ENCODE measurements at regions of chr7 and their contacts with region 1.

Region 1: DNA sequence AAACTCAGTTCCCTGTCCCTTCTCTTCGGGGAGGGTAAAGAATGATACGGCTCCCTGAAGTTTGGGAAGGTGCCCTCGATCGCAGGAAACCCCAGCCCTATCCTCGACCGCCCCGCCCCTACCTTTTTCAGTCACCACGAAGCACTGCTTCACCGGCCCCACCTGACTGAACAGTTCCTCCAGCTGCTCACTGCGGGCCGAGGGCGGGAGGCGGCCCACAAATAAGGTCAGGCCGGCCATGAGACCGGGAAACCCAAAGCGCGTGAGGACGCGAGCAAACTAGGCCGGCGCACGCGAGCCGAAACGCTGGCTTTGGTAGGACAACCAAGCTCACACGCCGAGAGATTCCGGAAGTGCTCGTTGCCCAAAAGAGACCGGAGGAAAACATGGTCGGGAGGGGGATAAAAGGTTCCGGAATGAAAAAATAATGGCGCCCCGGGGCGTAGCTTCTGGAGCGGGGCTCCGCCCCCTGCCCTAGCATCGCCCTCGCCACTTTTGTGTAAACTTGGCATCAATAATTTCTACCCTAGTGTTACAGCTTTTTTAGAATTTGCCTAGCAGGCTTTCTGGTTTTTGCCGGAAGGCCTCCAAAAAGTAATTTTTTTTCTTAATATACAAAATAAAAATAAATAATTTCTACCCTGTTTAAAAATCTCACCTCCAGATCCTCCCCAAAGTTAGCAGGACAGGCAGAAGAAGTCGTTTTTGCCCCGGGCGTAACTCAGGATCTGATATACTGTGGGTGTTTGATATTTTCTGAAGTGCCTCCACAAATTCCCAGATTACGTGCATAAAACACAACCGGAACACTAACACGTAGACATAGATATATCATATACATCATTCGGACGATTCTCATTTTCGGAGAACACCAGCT is at the start of gene RBM28:
- H3K4me3 ChIP-seq: peak within 1 kb of the TSS; percentile 95
- H3K27ac ChIP-seq: peak within 1 kb of the TSS; percentile 42
- H3K4me1 ChIP-seq: no peaks in the 10 kb centered on the region
- CTCF ChIP-seq: peak; percentile 28; the same call in 1 of the 2 replicates

Region 2: DNA sequence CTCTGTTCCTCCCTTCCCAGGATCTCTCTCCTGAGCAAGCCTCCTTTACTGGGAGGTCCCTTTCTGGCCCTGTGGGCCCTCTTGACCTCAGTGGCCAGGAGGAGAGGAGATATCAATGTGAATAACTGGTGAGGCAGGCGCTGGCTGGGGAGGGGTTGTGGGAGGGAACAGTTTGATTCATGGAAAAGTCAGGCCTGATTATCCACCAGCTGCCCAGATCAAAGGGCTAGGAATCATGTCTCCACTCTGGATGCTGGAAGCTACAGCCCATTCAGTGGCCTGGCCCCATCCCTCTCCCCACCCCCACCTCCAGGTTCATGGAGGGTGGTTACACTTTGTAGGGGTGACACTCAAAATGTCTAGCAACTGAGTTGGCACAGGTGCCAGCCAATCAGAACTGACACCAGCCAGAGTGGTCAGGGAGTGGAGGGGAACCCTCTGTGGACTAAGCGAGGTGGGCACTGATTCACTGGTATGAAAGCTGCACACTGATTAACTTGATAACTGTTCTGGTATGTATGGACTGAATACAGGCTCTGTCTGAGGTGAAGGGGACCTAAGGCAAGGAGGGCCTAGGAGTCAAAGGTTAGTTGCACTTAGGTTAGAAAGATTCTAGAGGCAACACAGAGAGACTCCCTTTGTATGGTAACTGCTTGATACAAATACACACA is 12.9 kb after region 1 on chr7:
- CTCF ChIA-PET with region 1: interaction called, 28 read pairs
- POLR2A ChIA-PET with region 1: interaction called, 4 read pairs
- H3K4me3 ChIP-seq: no peak overlapping the region
- H3K27ac ChIP-seq: no peak overlapping the region
- H3K4me1 ChIP-seq: no peaks in the 10 kb centered on the region; the same call in 1 of the 2 replicates
- CTCF ChIP-seq: no peak

Region 3: DNA sequence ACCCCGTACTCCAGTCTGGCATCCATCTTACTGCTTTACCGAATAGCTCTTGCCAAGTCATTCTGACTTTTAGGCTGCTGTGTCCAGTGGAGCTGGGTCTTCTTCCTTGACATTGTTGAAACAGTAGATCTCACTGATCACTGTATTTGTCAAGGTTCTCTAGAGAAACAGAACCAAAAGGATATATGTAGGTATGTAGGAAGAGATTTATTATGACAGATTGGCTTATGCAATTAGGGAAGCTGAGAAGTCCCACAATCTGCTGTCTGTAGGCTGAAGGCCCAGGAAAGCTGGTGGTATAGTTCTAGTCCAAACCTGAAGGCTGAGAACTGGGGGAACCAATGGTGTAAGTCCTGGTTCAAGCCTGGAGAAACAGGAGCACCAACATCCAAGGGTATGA is 29.8 kb after region 1 on chr7:
- CTCF ChIA-PET with region 1: interaction called, 378 read pairs
- POLR2A ChIA-PET with region 1: interaction called, 3 read pairs
- H3K4me3 ChIP-seq: no peak overlapping the region
- H3K27ac ChIP-seq: no peak overlapping the region
- H3K4me1 ChIP-seq: no peaks in the 10 kb centered on the region
- CTCF ChIP-seq: no peak

Region 4: GRCh38 chr7:128398016-128398840 is 54.4 kb after region 1 on chr7:
- CTCF ChIA-PET with region 1: interaction called, 378 read pairs
- POLR2A ChIA-PET with region 1: interaction called, 3 read pairs
- H3K4me3 ChIP-seq: no peak overlapping the region
- H3K27ac ChIP-seq: no peak overlapping the region
- H3K4me1 ChIP-seq: no peaks in the 10 kb centered on the region
- CTCF ChIP-seq: peak; percentile 73

Region 5: DNA sequence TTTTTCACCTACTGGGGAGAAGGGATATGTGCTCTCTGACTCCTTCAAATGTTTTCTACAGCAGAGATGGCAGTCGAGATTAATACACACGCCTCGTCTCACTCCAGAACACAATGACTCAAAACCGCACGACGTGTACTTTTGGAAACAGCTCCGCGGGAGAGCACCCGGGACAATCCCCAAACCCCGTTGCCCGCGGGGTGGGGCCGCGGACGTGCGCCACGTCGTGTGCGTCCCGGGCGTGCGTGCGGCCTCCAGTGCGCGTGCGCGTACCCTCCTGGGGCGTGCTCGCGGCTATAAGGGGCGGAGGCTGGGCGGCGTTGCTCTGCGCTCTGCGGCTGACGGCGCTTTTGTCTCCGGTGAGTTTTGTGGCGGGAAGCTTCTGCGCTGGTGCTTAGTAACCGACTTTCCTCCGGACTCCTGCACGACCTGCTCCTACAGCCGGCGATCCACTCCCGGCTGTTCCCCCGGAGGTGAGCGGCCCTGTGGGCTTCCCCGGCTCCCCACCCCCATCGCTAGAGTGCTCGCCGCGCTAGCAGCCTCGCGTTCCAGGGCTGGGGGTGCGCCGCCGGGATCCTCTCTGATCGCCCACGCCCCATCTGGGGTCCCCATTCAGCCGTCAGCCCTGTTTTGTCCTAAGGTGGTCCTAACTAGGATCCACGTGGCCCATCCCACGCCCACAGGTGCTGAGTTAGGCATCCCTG is 111.9 kb after region 1 on chr7 and contains the start of gene HILPDA:
- CTCF ChIA-PET with region 1: interaction called, 28 read pairs
- POLR2A ChIA-PET with region 1: interaction called, 3 read pairs
- H3K4me3 ChIP-seq: peak within 1 kb of the TSS; percentile 56
- H3K27ac ChIP-seq: peak within 1 kb of the TSS; percentile 81
- H3K4me1 ChIP-seq: peaks cover 14% of the 10 kb centered on the region
- CTCF ChIP-seq: no peak

Region 6: DNA sequence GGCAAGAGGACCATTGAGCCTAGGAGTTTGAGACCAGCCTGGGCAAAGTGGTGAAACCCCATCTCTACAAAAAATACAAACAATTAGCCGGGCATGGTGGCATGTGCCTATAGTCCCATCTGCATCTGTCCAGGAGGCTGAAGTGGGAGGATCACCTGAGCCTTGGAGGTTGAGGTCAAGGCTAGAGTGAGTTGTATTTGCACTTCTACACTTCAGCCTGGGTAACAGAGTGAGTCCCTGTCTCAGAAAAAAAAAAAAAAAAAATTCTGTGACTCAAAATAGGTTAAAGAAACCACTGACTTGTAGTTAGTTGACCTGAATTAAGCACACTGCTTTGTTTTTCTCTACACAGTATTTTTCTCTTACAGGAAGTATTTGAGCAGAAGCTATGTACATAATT is 207.1 kb after region 1 on chr7:
- CTCF ChIA-PET with region 1: no interaction called
- POLR2A ChIA-PET with region 1: no interaction called
- H3K4me3 ChIP-seq: no peak overlapping the region
- H3K27ac ChIP-seq: no peak overlapping the region
- H3K4me1 ChIP-seq: no peaks in the 10 kb centered on the region
- CTCF ChIP-seq: no peak

Region 7: GRCh38 chr7:128799451-128799850 is 455.7 kb after region 1 on chr7:
- CTCF ChIA-PET with region 1: no interaction called
- POLR2A ChIA-PET with region 1: no interaction called
- H3K4me3 ChIP-seq: no peak overlapping the region
- H3K27ac ChIP-seq: no peak overlapping the region
- H3K4me1 ChIP-seq: no peaks in the 10 kb centered on the region
- CTCF ChIP-seq: no peak